Activated CD4-positive, alpha-beta T cell treated with anti-CD3 and anti-CD28 coated beads for 36 hours (primary cell): ENCODE measurements at regions of chr20 and their contacts with region 1.

Region 1: GRCh38 chr20:4673371-4674001 is 48.2 kb upstream of the PRND start:
- DNase-seq: no peak
- ATAC-seq: no peak
- H3K4me3 Mint-ChIP-seq: no peak overlapping the region
- H3K27ac Mint-ChIP-seq: no peak overlapping the region
- H3K4me1 Mint-ChIP-seq: peaks cover 8% of the 10 kb centered on the region
- H3K27me3 Mint-ChIP-seq: no peaks in the 10 kb centered on the region

Region 2: GRCh38 chr20:4638826-4639225 is 34.7 kb before region 1 on chr20:
- CTCF ChIA-PET with region 1: interaction called, 3 read pairs
- POLR2A ChIA-PET with region 1: no interaction called
- intact Hi-C with region 1: loop called in 1 of 2 experiments (anchors 1 kb)
- DNase-seq: no peak
- ATAC-seq: no peak
- H3K4me3 Mint-ChIP-seq: no peak overlapping the region
- H3K27ac Mint-ChIP-seq: no peak overlapping the region
- H3K4me1 Mint-ChIP-seq: no peaks in the 10 kb centered on the region
- H3K27me3 Mint-ChIP-seq: peaks cover 4% of the 10 kb centered on the region

Region 3: DNA sequence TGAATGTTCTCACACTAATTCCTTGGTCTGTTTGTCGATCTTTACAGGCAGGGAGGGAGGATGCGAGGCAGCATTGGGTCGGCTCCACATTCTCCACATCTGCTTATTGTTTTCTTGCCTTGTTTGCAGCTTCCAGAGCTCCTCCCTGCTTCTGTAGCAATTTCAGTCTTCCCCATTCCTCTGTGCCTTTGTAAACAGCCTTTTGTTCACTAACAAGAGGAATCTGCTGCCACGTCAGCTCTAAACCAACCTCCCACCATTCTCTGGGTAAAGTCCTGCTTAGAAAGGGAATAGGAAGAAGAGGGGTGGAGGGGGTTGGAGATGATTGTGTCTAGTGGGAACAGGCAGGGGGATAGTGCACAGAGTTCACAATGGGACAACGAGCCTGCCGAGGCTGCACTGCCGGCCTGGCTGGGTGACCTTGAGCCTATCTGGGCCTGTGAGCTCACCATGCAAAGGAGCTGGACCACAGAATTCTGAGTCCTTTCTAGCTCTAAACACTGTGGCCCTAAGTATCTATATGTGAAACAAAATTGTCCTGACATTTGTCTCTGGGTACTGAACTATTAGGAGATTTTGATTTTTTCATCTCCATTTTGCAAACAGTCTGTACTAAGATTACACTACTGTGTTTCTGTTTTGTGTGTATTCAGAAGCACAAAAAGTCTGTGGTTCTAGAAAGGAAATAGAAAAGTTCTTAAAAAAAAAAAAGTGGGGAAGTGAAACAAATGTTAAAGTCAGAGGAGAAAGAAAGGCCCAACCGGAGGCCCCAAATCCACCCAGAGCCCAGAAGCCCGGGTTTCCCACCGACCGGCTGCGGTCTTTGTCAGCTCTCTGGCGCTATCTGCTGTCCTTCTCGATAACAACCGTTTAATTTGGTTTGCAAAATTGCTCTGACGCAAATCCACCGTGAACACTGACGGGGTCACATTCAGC is 46.8 kb after region 1 on chr20:
- CTCF ChIA-PET with region 1: no interaction called
- POLR2A ChIA-PET with region 1: no interaction called
- intact Hi-C with region 1: no loop called
- DNase-seq: peak; percentile 88
- ATAC-seq: peak; percentile 93
- H3K4me3 Mint-ChIP-seq: no peak overlapping the region
- H3K27ac Mint-ChIP-seq: peak overlapping the region; percentile 40
- H3K4me1 Mint-ChIP-seq: peaks cover 7% of the 10 kb centered on the region
- H3K27me3 Mint-ChIP-seq: no peaks in the 10 kb centered on the region

Region 4: GRCh38 chr20:5290596-5290995 is 617.1 kb after region 1 on chr20:
- CTCF ChIA-PET with region 1: no interaction called
- POLR2A ChIA-PET with region 1: no interaction called
- intact Hi-C with region 1: no loop called
- DNase-seq: no peak
- ATAC-seq: no peak
- H3K4me3 Mint-ChIP-seq: no peak overlapping the region
- H3K27ac Mint-ChIP-seq: no peak overlapping the region
- H3K4me1 Mint-ChIP-seq: no peaks in the 10 kb centered on the region
- H3K27me3 Mint-ChIP-seq: peaks cover 14% of the 10 kb centered on the region